ENCODE measurements at regions of chr1 and their contacts with region 1.

Region 1: DNA sequence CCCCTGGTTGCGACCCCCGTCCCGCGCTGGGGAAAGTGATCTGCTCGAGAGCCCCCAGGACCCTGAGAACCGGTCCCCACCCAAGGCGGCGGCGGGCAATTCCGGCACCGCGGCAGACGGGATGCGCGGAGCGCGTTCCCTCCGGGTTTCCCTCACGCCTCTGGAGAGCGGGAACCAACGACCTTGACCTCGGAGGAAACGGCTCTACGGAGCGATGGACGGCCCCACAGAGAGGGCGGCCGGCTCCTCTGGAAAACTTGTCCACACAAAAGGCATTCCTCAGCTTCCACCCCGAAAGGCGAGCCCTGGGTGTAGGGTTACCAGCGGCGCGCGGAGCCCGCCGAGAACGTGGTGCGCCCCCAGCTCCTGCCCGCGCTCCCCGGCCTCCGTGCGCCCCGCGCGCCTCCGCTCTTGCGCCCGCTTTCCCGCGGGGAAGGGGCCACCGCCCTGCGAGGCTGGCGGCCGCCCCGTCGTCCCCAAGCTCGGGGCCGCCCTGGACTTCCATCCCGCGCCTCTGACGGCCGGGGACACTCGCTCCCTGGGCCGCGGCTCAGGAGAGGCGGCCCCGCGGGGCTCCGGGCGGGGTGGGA is 391 bp upstream of the KIAA1614 start:
- DNase-seq: no peak
- H3K4me3 ChIP-seq: peak overlapping the region; percentile 65
- H3K27me3 ChIP-seq: no peaks in the 10 kb centered on the region
- CTCF ChIP-seq: no peak

Region 2: GRCh38 chr1:180928331-180929230 is 16.3 kb after region 1 on chr1:
- CTCF ChIA-PET with region 1: no interaction called
- POLR2A ChIA-PET with region 1: no interaction called
- DNase-seq: no peak
- H3K4me3 ChIP-seq: no peak overlapping the region
- H3K27me3 ChIP-seq: no peaks in the 10 kb centered on the region; the same call in 1 of the 2 replicates
- CTCF ChIP-seq: no peak

Region 3: GRCh38 chr1:180994262-180994661 is 82.0 kb after region 1 on chr1:
- CTCF ChIA-PET with region 1: no interaction called
- POLR2A ChIA-PET with region 1: no interaction called
- DNase-seq: no peak
- H3K4me3 ChIP-seq: no peak overlapping the region
- H3K27me3 ChIP-seq: no peaks in the 10 kb centered on the region
- CTCF ChIP-seq: no peak

Region 4: DNA sequence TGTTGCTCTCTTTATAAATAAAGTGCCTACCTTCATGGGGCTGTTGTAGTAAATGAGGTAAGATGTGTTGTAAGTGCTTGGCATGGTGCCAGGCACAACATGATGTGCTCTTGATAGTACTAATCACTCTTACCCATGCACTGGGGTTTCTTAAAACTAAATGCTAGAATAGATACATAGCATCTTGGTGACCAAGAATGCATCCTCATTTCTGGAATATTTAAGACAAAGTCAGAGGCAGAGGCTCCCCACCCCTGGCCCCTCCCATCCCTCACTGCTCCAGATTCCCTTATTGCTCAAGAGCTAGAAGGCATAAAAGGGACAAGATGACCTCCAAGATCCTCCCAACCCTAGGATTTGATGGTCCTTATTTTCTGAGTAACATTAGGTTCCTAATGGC is 1418.0 kb after region 1 on chr1:
- CTCF ChIA-PET with region 1: no interaction called
- POLR2A ChIA-PET with region 1: interaction called, 12 read pairs
- DNase-seq: no peak
- H3K4me3 ChIP-seq: no peak overlapping the region
- H3K27me3 ChIP-seq: no peaks in the 10 kb centered on the region
- CTCF ChIP-seq: no peak

Measured in BJ (cell line).